ENCODE measurements at regions of chr2 and their contacts with region 1.

Region 1: GRCh38 chr2:208254871-208255556 is at the start of gene IDH1:
- DNase-seq: peak; percentile 94
- ATAC-seq: peak; percentile 83
- H3K4me3 Mint-ChIP-seq: peak within 1 kb of the TSS; percentile 99
- H3K27ac Mint-ChIP-seq: peak within 1 kb of the TSS; percentile 76
- H3K4me1 Mint-ChIP-seq: peaks cover 21% of the 10 kb centered on the region
- H3K27me3 Mint-ChIP-seq: no peaks in the 10 kb centered on the region
- total RNA-seq, gene IDH1: 39.7 to 45.6 TPM

Region 2: GRCh38 chr2:208101716-208102631 is 153.0 kb before region 1 on chr2:
- CTCF ChIA-PET with region 1: interaction called, 13 read pairs
- DNase-seq: no peak
- ATAC-seq: peak; percentile 16
- H3K4me3 Mint-ChIP-seq: no peak overlapping the region
- H3K27ac Mint-ChIP-seq: no peak overlapping the region
- H3K4me1 Mint-ChIP-seq: peaks cover 16% of the 10 kb centered on the region
- H3K27me3 Mint-ChIP-seq: peaks cover 14% of the 10 kb centered on the region

Region 3: GRCh38 chr2:208175069-208175839 is 79.8 kb before region 1 on chr2:
- CTCF ChIA-PET with region 1: interaction called, 32 read pairs
- DNase-seq: peak; percentile 68
- ATAC-seq: peak; percentile 98
- H3K4me3 Mint-ChIP-seq: no peak overlapping the region
- H3K27ac Mint-ChIP-seq: no peak overlapping the region
- H3K4me1 Mint-ChIP-seq: peaks cover 3% of the 10 kb centered on the region
- H3K27me3 Mint-ChIP-seq: peaks cover 9% of the 10 kb centered on the region

Region 4: GRCh38 chr2:208265801-208266552 is 11.0 kb after region 1 on chr2 and contains the start of gene PIKFYVE:
- CTCF ChIA-PET with region 1: interaction called, 70 read pairs
- DNase-seq: peak; percentile 96
- ATAC-seq: peak; percentile 91
- H3K4me3 Mint-ChIP-seq: peak within 1 kb of the TSS; percentile 83
- H3K27ac Mint-ChIP-seq: peak within 1 kb of the TSS; percentile 96
- H3K4me1 Mint-ChIP-seq: peaks cover 49% of the 10 kb centered on the region
- H3K27me3 Mint-ChIP-seq: no peaks in the 10 kb centered on the region
- total RNA-seq, gene PIKFYVE: 27.3 to 32.6 TPM